Activated CD4-positive, alpha-beta T cell treated with anti-CD3 and anti-CD28 coated beads for 36 hours (primary cell): ENCODE measurements at regions of chr17 and their contacts with region 1.

Region 1: DNA sequence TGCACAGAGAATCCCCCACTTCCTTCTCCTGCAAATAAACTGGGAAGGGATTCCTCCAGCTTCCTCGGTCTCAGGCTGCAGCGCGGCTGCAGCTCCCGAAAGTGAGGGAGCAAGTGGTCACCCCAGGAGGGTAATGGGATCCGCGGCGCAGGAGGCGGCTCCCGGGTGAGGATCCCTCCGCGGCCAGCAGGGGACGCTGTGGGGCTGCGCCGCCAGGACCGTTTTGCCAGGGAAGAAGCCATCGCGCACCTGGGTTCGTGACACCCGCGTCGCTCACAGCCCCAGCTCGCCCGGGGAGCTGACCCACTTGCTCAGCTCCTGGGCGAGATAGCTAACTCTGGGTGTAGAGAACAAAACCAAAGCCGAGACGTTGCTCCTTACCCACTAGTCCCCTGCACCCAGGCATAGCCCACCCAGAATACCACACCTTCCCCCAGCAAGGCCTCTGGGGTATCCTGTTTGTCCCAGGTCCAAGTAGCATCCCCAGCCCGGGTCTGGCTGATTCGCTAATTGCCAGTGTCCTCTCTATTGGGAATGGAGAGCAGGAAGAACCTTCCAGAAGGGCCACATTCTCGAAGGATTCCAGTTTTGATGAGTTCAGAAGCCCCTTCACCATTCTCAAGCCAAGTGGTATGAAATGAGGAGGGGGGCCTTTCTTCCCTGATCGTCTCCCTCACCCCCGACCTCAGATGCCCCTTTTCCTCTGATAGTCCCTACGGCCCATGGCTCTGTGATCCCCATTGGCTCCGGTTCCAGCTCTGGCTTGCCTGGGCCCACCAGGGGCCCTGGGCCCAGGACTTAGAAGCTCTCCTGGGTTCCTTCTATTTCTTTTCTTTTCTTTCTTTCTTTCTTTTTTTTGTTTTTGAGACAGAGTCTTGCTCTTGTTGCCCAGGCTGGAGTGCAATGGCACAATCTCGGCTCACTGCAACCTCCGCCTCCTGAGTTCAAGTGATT is 14.1 kb downstream of the CYGB start:
- DNase-seq: peak; percentile 89
- ATAC-seq: peak; percentile 89
- H3K4me3 Mint-ChIP-seq: no peak overlapping the region
- H3K27ac Mint-ChIP-seq: no peak overlapping the region
- H3K4me1 Mint-ChIP-seq: peaks cover 13% of the 10 kb centered on the region
- H3K27me3 Mint-ChIP-seq: no peaks in the 10 kb centered on the region

Region 2: DNA sequence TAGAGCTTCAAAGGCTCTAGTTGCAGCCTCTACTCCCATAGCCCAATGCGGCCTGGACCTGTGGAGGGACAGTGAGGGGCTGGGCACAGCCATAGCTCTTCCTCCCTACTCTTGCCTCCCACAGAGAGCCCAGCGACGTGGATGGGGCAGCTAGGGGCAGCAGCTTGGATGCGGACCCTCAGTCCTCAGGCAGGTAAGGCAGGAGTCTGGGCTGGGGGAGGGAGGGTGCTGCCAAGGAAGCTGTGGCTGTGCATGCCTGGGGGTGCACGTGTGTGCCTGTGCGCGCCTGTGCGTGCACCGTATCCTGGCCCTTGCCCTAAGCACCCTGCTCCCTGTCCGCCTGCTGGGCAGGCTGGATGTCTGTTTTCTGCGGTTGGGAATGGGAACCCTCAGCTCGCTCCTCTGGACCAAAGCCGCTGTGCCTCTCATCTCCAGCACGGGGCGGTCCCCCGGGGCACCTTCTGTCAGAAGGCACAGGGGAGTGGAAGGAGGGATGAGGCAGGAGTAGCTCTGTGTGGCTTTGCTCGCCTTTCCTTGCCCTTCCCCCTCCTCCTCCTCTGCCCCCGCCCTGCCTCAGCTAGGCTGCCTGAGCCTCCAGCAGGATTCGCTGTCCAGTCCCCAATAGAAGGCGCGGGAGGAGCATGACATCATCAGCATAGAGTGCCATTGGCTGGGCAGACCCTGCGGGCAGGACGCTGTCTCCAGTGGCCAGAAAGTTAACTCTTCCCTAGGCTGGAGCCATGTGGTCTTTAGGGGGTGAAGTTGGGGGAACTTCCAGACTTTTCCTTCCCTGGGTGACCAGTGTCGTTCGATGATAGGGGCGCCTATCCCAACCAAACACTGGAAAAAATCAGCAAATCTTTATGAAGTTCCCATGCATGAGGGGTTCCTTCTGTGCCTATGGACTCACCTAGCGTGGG is 17.3 kb after region 1 on chr17:
- CTCF ChIA-PET with region 1: interaction called, 16 read pairs
- POLR2A ChIA-PET with region 1: no interaction called
- intact Hi-C with region 1: no loop called
- DNase-seq: peak; percentile 63
- ATAC-seq: peak; percentile 78
- H3K4me3 Mint-ChIP-seq: no peak overlapping the region
- H3K27ac Mint-ChIP-seq: no peak overlapping the region
- H3K4me1 Mint-ChIP-seq: no peaks in the 10 kb centered on the region
- H3K27me3 Mint-ChIP-seq: peaks cover 42% of the 10 kb centered on the region

Region 3: GRCh38 chr17:76567634-76568432 is 44.5 kb after region 1 on chr17:
- CTCF ChIA-PET with region 1: interaction called, 10 read pairs
- POLR2A ChIA-PET with region 1: no interaction called
- intact Hi-C with region 1: no loop called
- DNase-seq: no peak
- ATAC-seq: peak; percentile 4
- H3K4me3 Mint-ChIP-seq: no peak overlapping the region
- H3K27ac Mint-ChIP-seq: no peak overlapping the region
- H3K4me1 Mint-ChIP-seq: peaks cover 18% of the 10 kb centered on the region
- H3K27me3 Mint-ChIP-seq: no peaks in the 10 kb centered on the region

Region 4: GRCh38 chr17:76612977-76613851 is 89.9 kb after region 1 on chr17:
- CTCF ChIA-PET with region 1: interaction called, 10 read pairs
- POLR2A ChIA-PET with region 1: no interaction called
- intact Hi-C with region 1: no loop called
- DNase-seq: no peak
- ATAC-seq: no peak
- H3K4me3 Mint-ChIP-seq: no peak overlapping the region
- H3K27ac Mint-ChIP-seq: no peak overlapping the region
- H3K4me1 Mint-ChIP-seq: no peaks in the 10 kb centered on the region
- H3K27me3 Mint-ChIP-seq: no peaks in the 10 kb centered on the region

Region 5: DNA sequence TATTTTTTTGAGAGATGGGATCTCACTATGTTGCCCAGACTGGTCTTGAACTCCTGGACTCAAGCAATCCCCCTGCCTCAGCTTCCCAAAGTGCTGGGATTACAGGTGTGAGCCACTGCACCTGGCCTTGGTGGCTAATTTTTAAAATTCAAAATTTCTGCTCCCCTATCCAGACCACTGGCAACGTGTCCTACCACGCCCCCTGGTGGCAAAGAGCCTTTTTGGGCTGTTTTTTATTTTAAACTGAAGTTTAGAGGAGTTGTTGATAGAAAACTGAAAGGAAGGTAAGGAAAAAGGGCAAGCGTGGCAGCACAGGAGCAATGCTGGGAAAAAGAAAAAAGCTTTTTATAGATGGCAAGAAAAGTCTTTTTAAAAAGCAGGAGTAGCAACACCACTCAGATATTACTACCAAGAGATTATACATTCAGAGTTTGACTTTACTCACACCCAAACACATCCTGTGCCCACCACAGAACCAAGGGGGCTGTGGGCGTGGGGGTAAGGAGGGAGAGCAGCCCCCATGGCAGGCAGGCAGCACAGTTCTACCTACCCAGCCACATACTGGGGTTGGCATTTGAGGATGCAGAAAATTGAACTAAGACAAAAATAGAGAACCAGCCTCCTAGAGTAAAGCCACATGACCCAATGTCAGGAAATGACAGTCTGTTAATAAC is 191.6 kb after region 1 on chr17:
- CTCF ChIA-PET with region 1: interaction called, 7 read pairs
- POLR2A ChIA-PET with region 1: interaction called, 3 read pairs
- intact Hi-C with region 1: loop called (anchors 2 to 10 kb)
- DNase-seq: peak; percentile 87
- ATAC-seq: no peak
- H3K4me3 Mint-ChIP-seq: no peak overlapping the region
- H3K27ac Mint-ChIP-seq: peak overlapping the region; percentile 68
- H3K4me1 Mint-ChIP-seq: peaks cover 38% of the 10 kb centered on the region
- H3K27me3 Mint-ChIP-seq: no peaks in the 10 kb centered on the region